CD4-positive, alpha-beta memory T cell (primary cell): ENCODE measurements at regions of chr19 and their contacts with region 1.

Region 1: DNA sequence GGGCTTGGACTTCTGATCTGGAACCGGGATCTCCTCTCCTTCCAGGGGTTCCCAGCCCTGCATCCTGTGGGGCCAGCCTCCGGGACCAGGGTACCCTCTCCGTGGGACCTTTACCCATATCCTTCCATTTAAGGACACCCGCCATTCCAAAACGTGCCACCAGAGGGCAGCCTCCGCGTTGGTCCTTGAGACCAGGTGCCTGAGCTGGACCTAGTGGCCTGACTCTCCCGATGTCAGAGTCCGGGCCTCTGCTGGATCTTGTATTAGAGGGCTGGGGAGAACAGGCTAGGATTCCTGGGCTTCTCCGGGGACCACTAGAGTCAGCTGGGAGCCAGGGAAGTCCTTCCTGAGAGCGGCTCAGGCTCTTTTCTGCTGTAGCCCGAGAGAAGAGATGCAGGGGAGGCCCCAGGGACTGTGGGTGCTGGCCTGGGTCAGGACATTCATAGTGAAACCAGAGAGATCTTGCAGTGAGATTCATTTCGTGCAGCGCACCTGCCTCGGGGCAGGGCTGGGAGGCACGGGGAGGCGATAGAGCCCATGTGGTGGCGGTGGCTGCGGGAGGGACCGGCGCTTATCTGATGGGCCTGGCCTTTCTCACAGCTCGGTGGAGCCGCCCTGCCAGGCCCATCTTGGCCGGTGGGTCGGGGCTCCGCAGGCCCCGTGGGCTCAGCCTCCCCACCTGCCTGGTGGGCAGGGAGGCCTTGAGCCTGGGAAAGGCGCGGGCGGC is 9.8 kb upstream of the SLC7A10 start:
- DNase-seq: peak; percentile 57 to 74 (median 62)
- H3K4me3 ChIP-seq: peak overlapping the region in 1 of 2 donors; percentile 46
- H3K4me3 Mint-ChIP-seq: peak overlapping the region; percentile 77 to 88 (median 84)
- H3K27ac ChIP-seq: no peak overlapping the region
- H3K27ac Mint-ChIP-seq: peak overlapping the region in 4 of 7 donors; percentile 51 to 77 (median 67)
- H3K4me1 ChIP-seq: peaks cover 8% of the 10 kb centered on the region
- H3K4me1 Mint-ChIP-seq: peaks cover 4 to 22% (median 5%) of the 10 kb centered on the region in 4 donors
- H3K27me3 ChIP-seq: no peaks in the 10 kb centered on the region
- H3K27me3 Mint-ChIP-seq: peaks cover 7 to 9% of the 10 kb centered on the region in 2 donors

Region 2: DNA sequence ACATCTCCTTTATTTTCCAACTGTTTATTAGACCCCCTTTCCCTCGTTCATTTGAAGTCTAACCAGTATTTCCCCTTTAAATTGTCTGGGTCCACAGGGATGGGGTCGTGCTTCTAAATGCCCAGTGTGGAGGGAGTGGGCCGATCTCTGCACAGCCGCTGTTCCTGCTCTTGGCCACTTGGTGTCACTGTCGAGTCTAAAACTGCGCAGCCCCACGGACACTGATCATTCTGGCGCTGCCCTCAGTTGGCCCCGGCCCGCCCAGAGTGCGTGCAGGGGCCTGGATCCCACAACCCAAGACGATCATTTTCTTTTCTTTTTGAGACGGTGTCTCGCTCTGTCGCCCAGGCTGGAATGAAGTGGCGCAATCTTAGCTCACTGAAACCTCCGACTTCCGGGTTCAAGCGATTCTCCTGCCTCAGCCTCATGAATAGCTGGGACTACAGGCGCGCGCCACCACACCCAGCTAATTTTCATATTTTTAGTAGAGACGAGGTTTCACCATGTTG is 91.5 kb before region 1 on chr19:
- CTCF ChIA-PET with region 1: interaction called, 13 read pairs
- POLR2A ChIA-PET with region 1: no interaction called
- intact Hi-C with region 1: loop called (anchors 1 kb)
- DNase-seq: peak; percentile 54 to 66 (median 56)
- H3K4me3 ChIP-seq: no peak overlapping the region
- H3K4me3 Mint-ChIP-seq: peak overlapping the region in 6 of 8 donors; percentile 7 to 64 (median 33)
- H3K27ac ChIP-seq: no peak overlapping the region
- H3K27ac Mint-ChIP-seq: peak overlapping the region in 1 of 7 donors; percentile 31
- H3K4me1 ChIP-seq: peaks cover 6% of the 10 kb centered on the region
- H3K4me1 Mint-ChIP-seq: peaks cover 3 to 6% (median 5%) of the 10 kb centered on the region in 4 donors
- H3K27me3 ChIP-seq: no peaks in the 10 kb centered on the region
- H3K27me3 Mint-ChIP-seq: peaks cover 4 to 7% of the 10 kb centered on the region in 2 donors

Region 3: GRCh38 chr19:33302175-33302973 is 66.9 kb after region 1 on chr19 and contains the start of gene CEBPA:
- CTCF ChIA-PET with region 1: no interaction called
- POLR2A ChIA-PET with region 1: no interaction called
- intact Hi-C with region 1: loop called (anchors 1 kb)
- DNase-seq: peak in 4 of 5 donors; percentile 48 to 61 (median 54)
- H3K4me3 ChIP-seq: peak within 1 kb of the TSS; percentile 6 to 52
- H3K4me3 Mint-ChIP-seq: peak within 1 kb of the TSS in 7 of 8 donors; percentile 55 to 83 (median 68)
- H3K27ac ChIP-seq: no peak within 1 kb of the TSS
- H3K27ac Mint-ChIP-seq: no peak within 1 kb of the TSS
- H3K4me1 ChIP-seq: peaks cover 22% of the 10 kb centered on the region
- H3K4me1 Mint-ChIP-seq: peaks cover 0 to 12% (median 7%) of the 10 kb centered on the region in 4 donors
- H3K27me3 ChIP-seq: peaks cover 7% of the 10 kb centered on the region
- H3K27me3 Mint-ChIP-seq: peaks cover 10 to 14% of the 10 kb centered on the region in 2 donors
- total RNA-seq, gene CEBPA: 2.3 to 2.4 TPM

Region 4: DNA sequence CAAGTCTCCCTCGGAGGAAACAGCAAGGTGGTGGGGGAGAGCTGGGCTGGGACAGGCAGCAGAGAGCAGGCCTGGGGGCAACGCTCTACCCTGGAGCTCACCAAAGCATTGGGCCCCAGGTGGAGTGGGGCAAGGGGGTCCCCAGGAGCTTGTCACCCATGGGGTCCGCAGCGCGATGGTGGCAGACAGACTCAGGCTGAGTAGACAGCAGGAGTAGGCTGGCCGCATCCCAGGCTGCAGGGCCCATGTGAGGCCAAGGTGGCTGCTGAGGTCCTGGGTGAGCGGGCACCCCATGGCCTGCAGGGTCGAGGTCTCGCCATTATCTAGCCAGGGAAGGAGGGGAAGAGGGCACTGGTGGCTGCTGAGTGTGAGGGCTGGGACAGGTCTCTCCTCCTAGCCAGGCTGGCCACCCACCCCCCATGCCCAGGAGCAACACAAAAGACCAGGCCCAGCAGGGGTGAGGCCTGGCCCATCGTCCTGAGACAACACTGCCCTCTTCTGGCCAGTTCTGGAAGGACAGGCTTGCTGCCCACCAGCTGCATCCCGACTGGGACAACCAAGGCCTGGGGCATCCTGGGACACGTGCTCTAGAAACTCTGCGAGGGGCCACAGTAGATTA is 171.2 kb after region 1 on chr19:
- CTCF ChIA-PET with region 1: interaction called, 125 read pairs
- POLR2A ChIA-PET with region 1: no interaction called
- intact Hi-C with region 1: loop called (anchors 1 kb)
- DNase-seq: peak; percentile 52 to 69 (median 56)
- H3K4me3 ChIP-seq: no peak overlapping the region
- H3K4me3 Mint-ChIP-seq: no peak overlapping the region
- H3K27ac ChIP-seq: no peak overlapping the region
- H3K27ac Mint-ChIP-seq: peak overlapping the region in 1 of 7 donors; percentile 2
- H3K4me1 ChIP-seq: no peaks in the 10 kb centered on the region
- H3K4me1 Mint-ChIP-seq: no peaks in the 10 kb centered on the region
- H3K27me3 ChIP-seq: no peaks in the 10 kb centered on the region
- H3K27me3 Mint-ChIP-seq: no peaks in the 10 kb centered on the region

Region 5: DNA sequence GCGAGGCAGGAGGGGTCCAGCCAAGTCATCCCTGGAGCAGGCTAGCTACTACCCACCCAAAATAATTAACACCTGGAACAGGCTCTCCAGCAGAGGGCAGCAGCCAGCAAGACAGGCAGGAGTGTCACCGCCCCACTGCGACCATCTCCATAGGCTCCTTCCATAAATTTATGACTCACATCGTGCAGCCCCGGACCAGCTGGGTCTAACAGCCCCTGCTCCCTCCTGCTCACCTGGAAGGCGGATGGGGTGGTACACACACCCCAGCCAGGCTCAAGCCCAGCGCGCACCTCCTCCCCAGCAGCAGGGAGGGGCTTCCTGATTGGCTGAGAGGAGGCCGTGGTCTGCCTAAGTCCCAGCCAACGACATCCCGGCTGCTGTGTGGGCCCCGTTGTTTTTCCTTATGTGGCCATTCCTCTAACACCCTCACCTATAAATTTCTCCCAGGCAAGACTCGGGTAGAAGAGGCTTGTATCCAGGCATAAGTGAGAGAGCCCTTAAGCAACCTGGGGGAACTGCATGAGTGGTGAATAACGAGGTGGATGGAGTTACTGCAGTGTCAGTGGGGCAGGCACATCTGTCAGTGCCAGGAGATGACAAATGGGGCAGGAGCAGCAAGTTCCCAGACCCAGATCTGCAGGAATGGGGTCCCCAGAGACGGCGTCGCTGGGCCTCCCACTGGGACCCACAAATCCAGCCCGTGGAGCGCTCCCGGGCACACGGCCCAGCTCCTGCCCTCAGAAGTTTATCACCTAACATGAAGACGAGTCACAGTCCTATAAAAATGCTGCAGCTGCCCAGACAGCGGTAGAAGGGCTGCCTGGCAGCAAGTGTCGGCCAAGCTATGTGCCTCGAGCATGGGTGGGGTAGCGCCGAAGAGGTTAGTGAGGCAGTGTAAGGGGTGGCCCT is 181.1 kb after region 1 on chr19:
- CTCF ChIA-PET with region 1: interaction called, 13 read pairs
- POLR2A ChIA-PET with region 1: no interaction called
- intact Hi-C with region 1: no loop called
- DNase-seq: peak; percentile 48 to 65 (median 60)
- H3K4me3 ChIP-seq: peak overlapping the region in 1 of 2 donors; percentile 8
- H3K4me3 Mint-ChIP-seq: peak overlapping the region in 7 of 8 donors; percentile 19 to 81 (median 62)
- H3K27ac ChIP-seq: no peak overlapping the region
- H3K27ac Mint-ChIP-seq: peak overlapping the region in 1 of 7 donors; percentile 19
- H3K4me1 ChIP-seq: peaks cover 6% of the 10 kb centered on the region
- H3K4me1 Mint-ChIP-seq: peaks cover 2 to 17% (median 5%) of the 10 kb centered on the region in 4 donors
- H3K27me3 ChIP-seq: no peaks in the 10 kb centered on the region
- H3K27me3 Mint-ChIP-seq: no peaks in the 10 kb centered on the region

Region 6: GRCh38 chr19:33771384-33772101 is 536.1 kb after region 1 on chr19:
- CTCF ChIA-PET with region 1: interaction called, 3 read pairs
- POLR2A ChIA-PET with region 1: no interaction called
- intact Hi-C with region 1: loop called (anchors 1 kb)
- DNase-seq: peak; percentile 53 to 59 (median 57)
- H3K4me3 ChIP-seq: no peak overlapping the region
- H3K4me3 Mint-ChIP-seq: no peak overlapping the region
- H3K27ac ChIP-seq: no peak overlapping the region
- H3K27ac Mint-ChIP-seq: no peak overlapping the region
- H3K4me1 ChIP-seq: no peaks in the 10 kb centered on the region
- H3K4me1 Mint-ChIP-seq: peaks cover 0 to 6% (median 0%) of the 10 kb centered on the region in 4 donors
- H3K27me3 ChIP-seq: no peaks in the 10 kb centered on the region
- H3K27me3 Mint-ChIP-seq: peaks cover 10 to 21% of the 10 kb centered on the region in 2 donors